B cell (primary cell): ENCODE measurements at regions of chr15 and their contacts with region 1.

Region 1: GRCh38 chr15:62021991-62022600 is 38.2 kb downstream of the VPS13C start:
- DNase-seq: no peak
- ATAC-seq: no peak
- H3K4me3 ChIP-seq: no peak overlapping the region
- H3K4me3 Mint-ChIP-seq: no peak overlapping the region
- H3K27ac ChIP-seq: no peak overlapping the region
- H3K27ac Mint-ChIP-seq: no peak overlapping the region
- H3K4me1 ChIP-seq: peaks cover 0 to 7% of the 10 kb centered on the region in 2 donors
- H3K4me1 Mint-ChIP-seq: peaks cover 12% of the 10 kb centered on the region
- H3K27me3 ChIP-seq: no peaks in the 10 kb centered on the region
- H3K27me3 Mint-ChIP-seq: no peaks in the 10 kb centered on the region
- CTCF ChIP-seq: peak; percentile 34

Region 2: DNA sequence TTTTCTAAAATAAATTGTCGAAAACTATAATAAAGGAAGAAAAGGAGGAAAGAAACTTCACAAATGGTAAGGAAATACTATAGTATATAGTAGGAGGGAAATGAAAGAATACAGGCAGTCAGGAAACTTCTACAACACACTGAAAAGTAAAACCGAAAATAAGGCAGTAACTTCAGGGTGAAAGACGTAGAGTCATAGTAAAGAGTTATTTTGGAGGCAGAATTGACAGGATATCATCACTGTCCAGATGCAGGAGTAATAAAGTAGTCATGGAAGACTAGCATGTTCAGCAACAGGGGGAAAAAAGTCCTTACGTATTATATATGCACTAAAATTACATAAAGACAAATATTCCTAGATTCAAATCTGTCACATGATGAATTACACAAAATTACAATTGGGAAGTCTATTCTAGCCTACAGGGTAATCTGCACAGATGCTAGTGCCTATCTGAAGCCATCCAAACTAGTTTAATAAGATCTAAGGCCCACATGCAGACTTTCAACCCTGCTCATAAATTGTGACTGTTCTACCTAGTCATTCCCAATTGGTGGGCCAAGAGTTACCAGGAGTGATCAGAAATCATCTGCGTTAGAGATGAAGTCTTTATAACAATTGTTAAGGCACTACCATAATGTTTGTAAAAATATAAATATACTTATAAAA is 24.1 kb after region 1 on chr15:
- CTCF ChIA-PET with region 1: no interaction called
- POLR2A ChIA-PET with region 1: no interaction called
- intact Hi-C with region 1: loop called (anchors 2 kb)
- DNase-seq: no peak
- ATAC-seq: peak; percentile 41
- H3K4me3 ChIP-seq: peak overlapping the region in 2 of 5 experiments; percentile 14 to 39
- H3K4me3 Mint-ChIP-seq: peak overlapping the region; percentile 77
- H3K27ac ChIP-seq: peak overlapping the region; percentile 25 to 70
- H3K27ac Mint-ChIP-seq: peak overlapping the region; percentile 66
- H3K4me1 ChIP-seq: peaks cover 19 to 28% of the 10 kb centered on the region in 2 donors
- H3K4me1 Mint-ChIP-seq: peaks cover 40% of the 10 kb centered on the region
- H3K27me3 ChIP-seq: no peaks in the 10 kb centered on the region
- H3K27me3 Mint-ChIP-seq: no peaks in the 10 kb centered on the region
- CTCF ChIP-seq: no peak